Heart left ventricle (tissue), 16 donors: ENCODE measurements at regions of chr10 and their contacts with region 1.

Region 1: DNA sequence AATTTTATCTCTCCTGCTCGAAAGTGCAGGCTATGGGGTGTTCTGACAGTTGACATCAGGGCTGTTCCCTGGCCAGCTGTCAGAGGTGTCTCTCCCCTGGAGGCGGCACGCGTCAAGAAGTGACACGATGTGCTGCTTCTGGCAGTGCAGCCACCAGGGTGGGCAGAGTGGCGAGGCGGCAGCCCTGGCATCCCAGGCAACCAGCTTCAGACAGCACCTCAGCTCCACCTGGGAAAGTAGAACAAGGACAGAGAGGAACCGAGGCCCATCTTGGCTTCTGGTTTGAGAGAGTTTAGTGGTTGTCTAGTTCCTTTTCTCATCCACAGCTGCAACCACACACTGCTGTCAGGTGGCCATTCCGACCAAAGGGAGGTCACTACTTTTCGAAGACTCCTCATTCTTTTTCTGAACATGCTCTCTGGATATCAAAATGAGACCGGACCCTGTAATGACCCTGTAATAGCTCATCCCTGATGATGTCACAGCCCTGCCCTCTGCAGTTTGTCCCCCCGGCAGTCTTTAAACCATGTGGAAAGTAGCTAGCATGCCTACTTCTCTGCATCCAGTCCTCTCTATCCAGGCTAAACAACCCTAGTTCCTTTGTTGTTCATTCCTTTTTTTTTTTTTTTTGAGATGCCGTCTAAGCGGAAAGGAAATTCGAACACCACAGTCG is 381.0 kb upstream of the NRP1 start:
- DNase-seq: peak; percentile 16 to 82 (median 60)
- ATAC-seq: peak; percentile 55 to 94 (median 75)
- H3K4me3 ChIP-seq: no peak overlapping the region
- H3K27ac ChIP-seq: no peak overlapping the region
- H3K4me1 ChIP-seq: peaks cover 7 to 38% (median 23%) of the 10 kb centered on the region in 12 donors
- H3K27me3 ChIP-seq: no peaks in the 10 kb centered on the region
- CTCF ChIP-seq: peak in 1 of 12 donors; percentile 14
- POLR2A ChIP-seq: no peak

Region 2: DNA sequence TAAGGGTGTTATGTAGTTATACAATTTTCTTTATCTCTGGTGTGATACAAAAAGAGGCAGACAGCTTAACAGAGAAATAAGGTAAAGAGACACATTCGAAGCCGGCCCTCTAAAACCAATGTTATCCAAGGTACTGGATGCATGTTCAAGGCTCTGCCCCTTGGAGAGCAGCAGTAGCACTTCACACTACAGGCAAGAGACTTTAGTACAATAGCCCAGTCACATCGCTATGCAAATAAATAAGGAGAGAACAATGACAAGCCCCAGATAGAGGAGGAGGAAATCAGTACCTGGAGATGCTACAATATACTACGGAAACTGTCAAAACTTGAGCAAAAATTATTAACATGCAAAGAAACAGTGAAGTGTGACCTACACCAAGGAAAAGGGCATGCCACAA is 868.5 kb before region 1 on chr10:
- intact Hi-C with region 1: no loop called
- DNase-seq: no peak
- ATAC-seq: no peak
- H3K4me3 ChIP-seq: no peak overlapping the region
- H3K27ac ChIP-seq: no peak overlapping the region
- H3K4me1 ChIP-seq: no peaks in the 10 kb centered on the region
- H3K27me3 ChIP-seq: no peaks in the 10 kb centered on the region
- CTCF ChIP-seq: no peak
- POLR2A ChIP-seq: no peak

Region 3: GRCh38 chr10:33291053-33291592 is 424.3 kb before region 1 on chr10:
- intact Hi-C with region 1: no loop called
- DNase-seq: no peak
- ATAC-seq: no peak
- H3K4me3 ChIP-seq: no peak overlapping the region
- H3K27ac ChIP-seq: peak overlapping the region in 11 of 12 donors; percentile 2 to 67 (median 44)
- H3K4me1 ChIP-seq: peaks cover 8 to 100% (median 90%) of the 10 kb centered on the region in 12 donors
- H3K27me3 ChIP-seq: no peaks in the 10 kb centered on the region
- CTCF ChIP-seq: no peak
- POLR2A ChIP-seq: no peak

Region 4: DNA sequence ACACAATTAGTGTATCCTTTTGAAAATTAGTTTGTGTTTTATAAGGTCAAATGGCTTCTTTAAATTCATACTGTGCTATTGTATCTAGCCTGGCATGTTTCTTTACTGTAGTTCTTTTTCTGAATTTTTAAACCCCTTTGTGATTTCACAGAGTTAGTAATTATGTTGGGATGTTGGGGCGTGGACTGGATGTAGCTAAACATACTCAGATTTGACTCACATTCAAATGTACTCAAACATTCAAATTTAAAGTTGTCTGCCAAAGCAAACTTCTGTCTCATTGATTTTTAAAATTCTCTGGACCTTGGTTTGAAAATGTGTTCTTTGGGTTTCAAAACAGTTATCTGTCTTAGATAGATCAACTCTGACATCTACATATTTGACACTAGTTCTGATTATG is 373.8 kb before region 1 on chr10:
- intact Hi-C with region 1: loop called in 5 of 10 experiments (anchors 5 to 10 kb)
- DNase-seq: no peak
- ATAC-seq: no peak
- H3K4me3 ChIP-seq: peak overlapping the region in 7 of 12 donors; percentile 4 to 20 (median 15)
- H3K27ac ChIP-seq: peak overlapping the region in 8 of 12 donors; percentile 2 to 49 (median 34)
- H3K4me1 ChIP-seq: peaks cover 0 to 53% (median 31%) of the 10 kb centered on the region in 12 donors
- H3K27me3 ChIP-seq: peaks cover 0 to 3% (median 0%) of the 10 kb centered on the region in 9 donors
- CTCF ChIP-seq: no peak
- POLR2A ChIP-seq: no peak

Region 5: DNA sequence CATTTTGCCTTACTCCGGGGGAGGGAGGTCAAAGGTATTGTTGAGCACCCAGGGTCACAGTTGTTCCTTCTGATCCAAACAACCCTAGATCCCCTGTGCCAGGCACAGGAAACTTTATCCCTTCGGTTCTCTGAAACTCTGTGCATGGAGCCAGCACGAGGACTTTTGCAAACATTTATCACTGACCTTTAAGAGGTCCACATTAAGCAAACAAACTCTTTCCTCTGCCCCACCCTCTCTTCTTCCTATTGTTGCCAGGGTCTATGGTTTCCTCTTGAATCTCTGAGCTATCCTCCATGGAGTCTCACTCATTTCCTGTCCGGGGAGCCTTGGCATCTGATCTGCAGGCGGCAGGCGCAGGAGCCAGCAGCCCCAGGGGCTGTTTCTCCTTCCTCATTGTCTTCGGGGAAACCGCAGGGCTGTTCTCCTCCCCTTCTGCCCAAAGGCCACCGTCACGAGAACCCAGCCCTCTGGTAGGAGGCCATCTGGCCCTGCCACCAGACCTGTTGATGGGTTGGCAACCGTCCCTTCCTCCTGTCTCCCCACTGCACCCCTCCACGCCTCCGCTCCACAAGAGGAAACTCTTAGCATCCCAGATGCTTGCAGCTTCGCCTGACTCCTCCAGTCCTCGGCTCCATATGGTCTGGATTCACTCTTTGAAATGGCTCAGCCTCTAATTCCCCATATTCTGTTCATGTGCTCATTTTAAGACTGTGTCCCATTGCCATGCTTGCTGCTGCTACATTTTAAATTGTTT is 53.7 kb before region 1 on chr10:
- intact Hi-C with region 1: loop called in 2 of 10 experiments (anchors 5 kb)
- DNase-seq: peak; percentile 69 to 88 (median 82)
- ATAC-seq: peak; percentile 52 to 90 (median 86)
- H3K4me3 ChIP-seq: peak overlapping the region in 3 of 12 donors; percentile 1 to 15 (median 13)
- H3K27ac ChIP-seq: peak overlapping the region in 10 of 12 donors; percentile 7 to 86 (median 28)
- H3K4me1 ChIP-seq: peaks cover 0 to 47% (median 20%) of the 10 kb centered on the region in 12 donors
- H3K27me3 ChIP-seq: no peaks in the 10 kb centered on the region
- CTCF ChIP-seq: no peak
- POLR2A ChIP-seq: no peak

Region 6: GRCh38 chr10:33674986-33675599 is 40.3 kb before region 1 on chr10:
- intact Hi-C with region 1: loop called in 1 of 10 experiments (anchors 5 kb)
- DNase-seq: peak in 1 of 5 donors; percentile 24
- ATAC-seq: peak in 3 of 4 donors; percentile 38 to 82 (median 51)
- H3K4me3 ChIP-seq: peak overlapping the region in 6 of 12 donors; percentile 8 to 46 (median 27)
- H3K27ac ChIP-seq: peak overlapping the region in 11 of 12 donors; percentile 12 to 78 (median 64)
- H3K4me1 ChIP-seq: peaks cover 0 to 28% (median 10%) of the 10 kb centered on the region in 12 donors
- H3K27me3 ChIP-seq: no peaks in the 10 kb centered on the region
- CTCF ChIP-seq: no peak
- POLR2A ChIP-seq: no peak